CD4-positive, alpha-beta memory T cell (primary cell): ENCODE measurements at regions of chr1 and their contacts with region 1.

Region 1: DNA sequence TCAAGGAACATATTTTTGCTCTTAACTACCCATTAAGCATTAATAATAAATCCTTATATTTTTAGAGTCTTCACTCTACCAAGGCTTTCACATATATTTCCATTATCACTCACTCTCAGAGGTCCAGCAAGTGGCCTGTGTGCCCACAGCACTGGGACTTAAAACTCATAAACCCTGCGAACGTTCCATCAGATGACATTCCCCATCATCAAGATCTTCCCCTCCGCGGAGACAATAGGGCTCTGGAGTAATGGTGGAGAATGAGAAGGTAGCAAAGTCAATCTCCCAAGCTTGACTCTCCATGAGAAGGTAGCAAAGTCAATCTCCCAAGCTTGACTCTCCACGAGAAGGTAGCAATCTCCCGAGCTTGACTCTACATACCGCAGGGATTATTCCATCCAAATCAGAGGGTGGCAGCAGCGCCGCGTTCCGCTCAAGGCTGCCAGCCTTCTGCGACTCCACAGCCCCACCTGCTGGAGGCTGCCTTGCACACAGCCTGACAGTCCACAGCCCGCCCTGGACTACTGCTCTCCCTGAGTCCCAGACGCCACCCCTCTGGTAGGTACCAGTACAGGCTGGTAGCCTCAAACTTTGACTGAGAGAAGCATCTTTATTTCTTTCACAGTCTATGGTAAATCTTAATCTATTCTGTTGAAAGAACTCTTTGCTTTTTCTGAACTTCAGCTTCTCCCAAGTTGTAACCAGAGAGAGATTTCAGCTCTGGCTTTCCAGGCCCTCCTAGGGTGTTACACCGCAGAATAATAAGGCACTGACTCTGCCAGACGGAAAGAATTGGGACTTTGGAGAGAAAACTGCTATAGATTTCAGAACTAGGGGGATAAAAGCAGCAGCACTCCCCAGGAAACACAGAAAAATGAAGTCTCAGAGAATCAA is 26.4 kb upstream of the CTTNBP2NL start:
- DNase-seq: peak; percentile 69 to 76 (median 71)
- H3K4me3 ChIP-seq: no peak overlapping the region
- H3K4me3 Mint-ChIP-seq: peak overlapping the region in 5 of 8 donors; percentile 13 to 49 (median 26)
- H3K27ac ChIP-seq: no peak overlapping the region
- H3K27ac Mint-ChIP-seq: no peak overlapping the region
- H3K4me1 ChIP-seq: peaks cover 4% of the 10 kb centered on the region
- H3K4me1 Mint-ChIP-seq: peaks cover 3 to 5% (median 4%) of the 10 kb centered on the region in 4 donors
- H3K27me3 ChIP-seq: no peaks in the 10 kb centered on the region
- H3K27me3 Mint-ChIP-seq: peaks cover 28 to 32% of the 10 kb centered on the region in 2 donors

Region 2: GRCh38 chr1:112298558-112298957 is 71.1 kb before region 1 on chr1:
- CTCF ChIA-PET with region 1: interaction called, 20 read pairs
- POLR2A ChIA-PET with region 1: no interaction called
- intact Hi-C with region 1: loop called (anchors 2 kb)
- DNase-seq: peak in 2 of 5 donors; percentile 2 to 6
- H3K4me3 ChIP-seq: no peak overlapping the region
- H3K4me3 Mint-ChIP-seq: no peak overlapping the region
- H3K27ac ChIP-seq: no peak overlapping the region
- H3K27ac Mint-ChIP-seq: peak overlapping the region in 1 of 7 donors; percentile 1
- H3K4me1 ChIP-seq: no peaks in the 10 kb centered on the region
- H3K4me1 Mint-ChIP-seq: no peaks in the 10 kb centered on the region
- H3K27me3 ChIP-seq: no peaks in the 10 kb centered on the region
- H3K27me3 Mint-ChIP-seq: peaks cover 11 to 16% of the 10 kb centered on the region in 2 donors

Region 3: DNA sequence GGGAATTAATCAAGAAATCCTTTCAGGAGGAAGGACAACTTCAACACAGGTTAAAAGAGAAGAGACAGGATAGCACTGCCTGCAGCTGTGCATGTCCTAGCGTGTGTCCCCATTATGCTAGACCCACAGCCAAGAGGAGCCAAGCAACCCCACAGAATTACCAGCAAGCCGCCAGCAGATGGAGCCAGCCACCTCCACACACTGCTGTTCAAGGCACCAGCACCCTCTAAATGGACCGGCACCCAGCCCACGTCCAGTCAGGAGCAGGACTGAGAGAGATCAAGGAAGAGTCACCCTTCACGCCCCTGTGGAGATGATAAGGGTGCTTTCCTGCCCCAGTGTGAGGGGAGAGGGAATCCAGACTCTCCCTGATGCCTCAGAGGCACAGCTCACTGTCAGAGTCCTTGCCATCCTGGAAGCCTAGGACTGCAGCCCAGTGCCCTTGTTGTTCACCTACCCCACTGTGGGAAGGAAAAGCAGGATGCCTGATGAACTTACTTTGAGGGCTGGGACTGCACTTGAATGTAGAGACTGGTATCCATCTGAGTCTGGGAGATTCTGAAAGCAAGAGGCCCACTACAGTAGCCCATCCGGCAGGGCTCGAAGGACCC is 10.7 kb before region 1 on chr1:
- CTCF ChIA-PET with region 1: interaction called, 44 read pairs
- POLR2A ChIA-PET with region 1: no interaction called
- intact Hi-C with region 1: no loop called
- DNase-seq: peak in 3 of 5 donors; percentile 7 to 17 (median 14)
- H3K4me3 ChIP-seq: no peak overlapping the region
- H3K4me3 Mint-ChIP-seq: no peak overlapping the region
- H3K27ac ChIP-seq: no peak overlapping the region
- H3K27ac Mint-ChIP-seq: peak overlapping the region in 1 of 7 donors; percentile 48
- H3K4me1 ChIP-seq: no peaks in the 10 kb centered on the region
- H3K4me1 Mint-ChIP-seq: peaks cover 0 to 3% (median 0%) of the 10 kb centered on the region in 4 donors
- H3K27me3 ChIP-seq: no peaks in the 10 kb centered on the region
- H3K27me3 Mint-ChIP-seq: peaks cover 17 to 34% of the 10 kb centered on the region in 2 donors

Region 4: GRCh38 chr1:112435448-112435847 is 65.8 kb after region 1 on chr1:
- CTCF ChIA-PET with region 1: no interaction called
- POLR2A ChIA-PET with region 1: no interaction called
- intact Hi-C with region 1: no loop called
- DNase-seq: no peak
- H3K4me3 ChIP-seq: no peak overlapping the region
- H3K4me3 Mint-ChIP-seq: no peak overlapping the region
- H3K27ac ChIP-seq: no peak overlapping the region
- H3K27ac Mint-ChIP-seq: no peak overlapping the region
- H3K4me1 ChIP-seq: no peaks in the 10 kb centered on the region
- H3K4me1 Mint-ChIP-seq: no peaks in the 10 kb centered on the region
- H3K27me3 ChIP-seq: no peaks in the 10 kb centered on the region
- H3K27me3 Mint-ChIP-seq: peaks cover 15 to 17% of the 10 kb centered on the region in 2 donors